GM12878 (cell line): ENCODE measurements at regions of chr2 and their contacts with region 1.

Region 1: GRCh38 chr2:74178201-74179062 is at the start of gene MOB1A:
- DNase-seq: peak; percentile 98
- ATAC-seq: peak; percentile 86
- H3K4me3 ChIP-seq: peak within 1 kb of the TSS; percentile 98
- H3K27ac ChIP-seq: peak within 1 kb of the TSS; percentile 96
- H3K4me1 ChIP-seq: peaks cover 30% of the 10 kb centered on the region
- H3K27me3 ChIP-seq: no peaks in the 10 kb centered on the region
- CTCF ChIP-seq: no peak
- EP300 ChIP-seq: 0 out of 4 replicates have a peak, but pooled peaks of 1 of the 2 experiments have one; percentile 17
- POLR2A ChIP-seq: peak; percentile 94
- RAD21 ChIP-seq: no peak
- polyA plus RNA-seq, gene MOB1A: 41.2 to 58.5 TPM

Region 2: DNA sequence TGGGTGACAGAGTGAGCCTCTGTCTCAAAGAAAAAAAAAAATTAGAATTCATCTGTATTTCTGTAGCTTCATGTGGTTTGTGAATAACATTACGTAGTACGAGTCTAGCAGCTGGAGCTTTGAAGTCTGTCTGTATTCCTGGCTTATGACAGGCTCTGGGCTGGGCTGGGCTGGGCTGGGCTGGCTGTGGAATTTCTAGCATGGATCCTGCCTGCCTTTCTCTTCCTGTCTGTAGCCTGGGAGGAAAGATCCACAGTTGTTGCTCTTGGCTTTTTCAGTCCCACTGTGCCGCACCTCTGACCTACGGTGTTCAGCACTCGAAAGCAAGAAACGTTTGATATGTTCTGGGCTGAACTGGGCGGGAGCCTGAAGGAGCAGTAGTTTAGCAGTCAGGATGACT is 86.2 kb before region 1 on chr2:
- CTCF ChIA-PET with region 1: no interaction called
- POLR2A ChIA-PET with region 1: no interaction called
- RAD21 ChIA-PET with region 1: no interaction called
- SMC1A ChIA-PET with region 1: no interaction called
- in situ Hi-C with region 1: no loop called
- intact Hi-C with region 1: no loop called
- DNase-seq: no peak
- ATAC-seq: no peak
- H3K4me3 ChIP-seq: no peak overlapping the region
- H3K27ac ChIP-seq: no peak overlapping the region
- H3K4me1 ChIP-seq: no peaks in the 10 kb centered on the region
- H3K27me3 ChIP-seq: no peaks in the 10 kb centered on the region
- CTCF ChIP-seq: no peak
- EP300 ChIP-seq: no peak
- POLR2A ChIP-seq: no peak
- RAD21 ChIP-seq: no peak

Region 3: DNA sequence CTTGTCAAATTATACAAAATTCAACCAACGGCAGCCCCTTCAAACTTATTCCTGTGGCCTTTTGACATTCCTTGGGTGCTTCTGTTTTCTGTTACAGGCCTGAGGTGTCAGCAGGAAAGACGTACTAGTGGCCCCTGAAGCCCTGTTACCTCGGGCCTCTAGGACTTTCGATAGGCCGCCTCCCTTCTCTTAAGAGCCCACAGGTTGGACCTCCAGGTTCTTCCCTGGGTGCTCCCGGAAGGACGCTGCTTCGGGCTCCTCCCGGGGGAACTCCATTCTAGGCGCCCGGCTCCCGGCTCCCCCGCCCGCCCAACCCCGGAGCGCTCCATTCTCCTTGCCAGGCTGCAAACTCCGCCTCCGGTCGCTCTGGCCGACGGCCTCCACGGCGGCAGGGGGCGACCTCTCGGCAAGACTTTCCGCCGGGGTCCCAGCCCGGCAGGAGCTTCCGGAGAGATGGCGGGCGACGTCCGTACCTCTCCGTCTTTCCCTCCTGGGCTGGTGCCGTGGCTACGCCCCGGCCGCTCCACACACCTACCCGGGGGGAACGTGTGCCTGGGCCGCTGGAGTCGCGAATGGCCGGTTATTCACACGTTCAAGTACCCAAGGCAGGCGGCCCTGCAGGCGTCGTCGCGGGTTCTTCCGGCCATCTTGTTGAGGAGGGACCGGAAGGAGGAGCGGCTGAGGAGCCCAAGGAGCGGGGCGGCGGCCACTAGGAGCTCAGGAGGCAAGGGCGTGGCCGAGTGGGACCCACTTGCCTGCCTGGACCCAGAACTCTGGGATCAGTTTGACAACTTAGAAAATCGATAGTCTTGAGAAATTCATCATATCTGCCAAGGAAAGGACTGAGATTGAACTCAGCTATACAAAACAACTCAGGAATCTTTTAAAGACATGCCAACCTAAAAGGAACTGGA is 58.3 kb before region 1 on chr2:
- CTCF ChIA-PET with region 1: interaction called, 5 read pairs
- POLR2A ChIA-PET with region 1: interaction called, 4 read pairs
- RAD21 ChIA-PET with region 1: interaction called, 3 read pairs
- SMC1A ChIA-PET with region 1: no interaction called
- in situ Hi-C with region 1: no loop called
- intact Hi-C with region 1: loop called (anchors 2 kb)
- DNase-seq: peak; percentile 54
- ATAC-seq: peak; percentile 99
- H3K4me3 ChIP-seq: peak overlapping the region; percentile 95
- H3K27ac ChIP-seq: peak overlapping the region; percentile 96
- H3K4me1 ChIP-seq: peaks cover 3% of the 10 kb centered on the region; the same call in 1 of the 2 replicates
- H3K27me3 ChIP-seq: no peaks in the 10 kb centered on the region; a peak in 1 of 4 replicates
- CTCF ChIP-seq: peak; percentile 55 to 78 (median 70)
- EP300 ChIP-seq: no peak
- POLR2A ChIP-seq: peak; percentile 95
- RAD21 ChIP-seq: no peak

Region 4: DNA sequence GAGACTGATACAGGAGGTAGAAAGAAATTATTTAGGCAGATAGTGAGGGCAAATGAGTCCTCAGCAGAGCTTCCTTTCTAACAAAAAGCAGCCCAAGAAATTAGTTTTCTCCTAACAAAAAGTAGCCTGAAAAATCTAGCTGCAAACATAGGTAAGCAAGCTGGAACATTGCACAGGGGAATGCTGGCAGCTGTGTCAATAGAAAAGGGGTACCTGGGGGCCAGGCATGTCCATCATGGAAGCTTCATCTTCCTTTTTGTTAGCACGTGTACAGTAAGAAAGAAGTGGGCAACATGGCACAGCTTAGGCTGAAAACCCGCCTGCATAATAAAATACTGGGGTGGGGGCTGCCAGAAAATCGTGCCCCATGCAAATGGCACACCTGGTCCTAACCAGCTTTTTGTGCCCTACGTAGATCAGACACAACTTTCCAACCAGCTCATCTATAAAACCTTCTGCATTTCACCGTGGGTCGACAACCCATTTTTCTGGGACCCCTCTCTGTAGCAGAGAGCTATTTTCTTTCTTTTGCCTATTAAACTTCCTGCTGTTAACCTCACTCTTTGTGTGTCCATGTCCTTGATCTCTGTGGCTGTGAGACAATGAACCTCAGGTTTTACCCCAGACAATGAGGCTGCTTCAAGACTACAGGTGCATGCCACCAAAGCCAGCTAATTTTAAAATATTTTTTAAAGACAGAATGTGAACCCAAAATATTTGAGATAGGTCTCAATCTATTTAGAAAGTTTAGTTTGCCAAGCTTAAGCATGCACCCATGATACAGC is 13.4 kb after region 1 on chr2:
- CTCF ChIA-PET with region 1: interaction called, 90 read pairs
- POLR2A ChIA-PET with region 1: interaction called, 83 read pairs
- RAD21 ChIA-PET with region 1: interaction called, 12 read pairs
- SMC1A ChIA-PET with region 1: interaction called, 14 read pairs
- in situ Hi-C with region 1: no loop called
- intact Hi-C with region 1: no loop called
- DNase-seq: no peak
- ATAC-seq: no peak
- H3K4me3 ChIP-seq: no peak overlapping the region
- H3K27ac ChIP-seq: no peak overlapping the region
- H3K4me1 ChIP-seq: peaks cover 9% of the 10 kb centered on the region
- H3K27me3 ChIP-seq: no peaks in the 10 kb centered on the region
- CTCF ChIP-seq: no peak
- EP300 ChIP-seq: no peak
- POLR2A ChIP-seq: no peak
- RAD21 ChIP-seq: no peak

Region 5: DNA sequence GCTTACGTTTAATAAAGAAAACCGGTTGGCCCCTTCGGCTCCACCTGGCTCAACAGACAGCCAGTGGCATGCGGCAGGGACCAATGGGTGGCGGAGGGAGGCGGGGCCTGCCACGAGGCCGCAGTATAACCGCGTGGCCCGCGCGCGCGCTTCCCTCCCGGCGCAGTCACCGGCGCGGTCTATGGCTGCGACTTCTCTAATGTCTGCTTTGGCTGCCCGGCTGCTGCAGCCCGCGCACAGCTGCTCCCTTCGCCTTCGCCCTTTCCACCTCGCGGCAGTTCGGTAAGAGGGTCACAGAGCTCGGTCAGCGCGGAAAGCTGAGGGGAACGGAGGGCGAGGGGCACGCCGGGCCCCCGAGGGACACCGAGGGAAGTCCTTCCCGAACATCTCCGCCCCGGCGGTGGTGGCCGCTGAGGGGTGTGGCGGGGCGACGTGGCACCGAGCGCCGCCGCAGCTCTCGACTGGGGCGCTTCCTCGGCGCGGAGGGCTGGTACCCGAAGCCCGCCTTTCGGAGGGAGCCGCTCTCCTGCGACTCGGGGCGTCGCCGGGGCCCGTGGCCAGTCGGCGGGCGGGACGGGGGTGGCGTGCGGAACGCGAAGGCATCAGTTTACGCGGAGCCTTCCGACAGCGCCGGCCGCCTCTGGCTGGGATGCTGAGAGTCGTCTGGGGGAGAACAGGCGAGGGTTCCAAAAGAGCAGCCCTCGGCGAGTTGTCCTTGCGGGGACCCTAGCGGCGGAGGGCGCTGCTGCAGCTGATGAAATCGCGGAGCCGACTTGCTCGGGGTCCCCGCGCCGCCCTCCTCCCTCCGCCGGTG is 20.2 kb after region 1 on chr2 and contains the start of gene MTHFD2:
- CTCF ChIA-PET with region 1: interaction called, 90 read pairs
- POLR2A ChIA-PET with region 1: interaction called, 83 read pairs
- RAD21 ChIA-PET with region 1: interaction called, 39 read pairs
- SMC1A ChIA-PET with region 1: interaction called, 28 read pairs
- in situ Hi-C with region 1: no loop called
- intact Hi-C with region 1: loop called (anchors 1 kb)
- DNase-seq: peak; percentile 90
- ATAC-seq: peak; percentile 92
- H3K4me3 ChIP-seq: peak within 1 kb of the TSS; percentile 96
- H3K27ac ChIP-seq: peak within 1 kb of the TSS; percentile 93
- H3K4me1 ChIP-seq: peaks cover 8% of the 10 kb centered on the region
- H3K27me3 ChIP-seq: no peaks in the 10 kb centered on the region
- CTCF ChIP-seq: peak; percentile 81 to 90 (median 87)
- EP300 ChIP-seq: no peak
- POLR2A ChIP-seq: peak; percentile 93
- RAD21 ChIP-seq: peak; percentile 62
- polyA plus RNA-seq, gene MTHFD2: 237 to 292 TPM

Region 6: GRCh38 chr2:74206180-74206688 is 27.8 kb after region 1 on chr2:
- CTCF ChIA-PET with region 1: interaction called, 90 read pairs
- POLR2A ChIA-PET with region 1: interaction called, 83 read pairs
- RAD21 ChIA-PET with region 1: interaction called, 39 read pairs
- SMC1A ChIA-PET with region 1: interaction called, 28 read pairs
- in situ Hi-C with region 1: no loop called
- intact Hi-C with region 1: loop called (anchors 1 kb)
- DNase-seq: peak; percentile 61
- ATAC-seq: peak; percentile 87
- H3K4me3 ChIP-seq: peak overlapping the region; percentile 11; the same call in 1 of the 2 replicates
- H3K27ac ChIP-seq: peak overlapping the region; percentile 26
- H3K4me1 ChIP-seq: peaks cover 24% of the 10 kb centered on the region
- H3K27me3 ChIP-seq: no peaks in the 10 kb centered on the region
- CTCF ChIP-seq: no peak
- EP300 ChIP-seq: 0 out of 4 replicates have a peak, but pooled peaks have one; percentile 48 to 49
- POLR2A ChIP-seq: peak; percentile 65
- RAD21 ChIP-seq: peak; percentile 16; the same call in 1 of the 2 replicates

Region 7: DNA sequence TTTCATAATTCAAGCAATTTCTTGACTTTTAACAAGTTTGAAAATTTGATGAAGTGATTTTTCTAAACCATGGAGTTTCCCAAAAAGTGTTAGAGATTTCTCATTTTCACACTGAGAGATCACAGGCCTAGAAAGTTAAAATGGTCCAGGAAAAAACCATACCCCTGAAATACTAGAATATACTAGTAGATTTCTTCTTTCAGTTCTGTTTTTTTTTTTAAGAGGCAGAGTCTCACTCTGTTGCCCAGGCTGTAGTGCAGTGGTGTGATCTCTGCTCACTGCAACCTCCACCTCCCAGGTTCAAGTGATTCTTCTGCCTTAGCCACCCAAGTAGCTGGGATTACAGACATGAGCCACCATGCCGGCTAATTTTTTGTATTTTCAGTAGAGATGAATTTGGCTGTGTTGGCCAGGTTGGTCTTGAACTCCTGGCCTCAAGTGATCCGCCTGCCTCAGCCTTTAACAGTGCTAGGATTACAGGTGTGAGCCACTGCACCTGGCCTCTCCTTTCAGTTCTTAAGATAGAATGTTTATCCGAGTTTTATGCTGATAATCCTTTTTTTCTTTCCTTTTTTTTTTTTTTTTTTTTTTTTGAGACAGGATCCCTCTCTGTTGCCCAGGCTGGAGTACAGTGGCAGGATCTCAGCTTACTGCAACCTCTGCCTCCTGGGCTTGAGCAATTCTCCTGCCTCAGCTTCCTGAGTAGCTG is 34.4 kb after region 1 on chr2:
- CTCF ChIA-PET with region 1: no interaction called
- POLR2A ChIA-PET with region 1: interaction called, 45 read pairs
- RAD21 ChIA-PET with region 1: interaction called, 5 read pairs
- SMC1A ChIA-PET with region 1: interaction called, 3 read pairs
- in situ Hi-C with region 1: no loop called
- intact Hi-C with region 1: no loop called
- DNase-seq: no peak
- ATAC-seq: peak; percentile 75
- H3K4me3 ChIP-seq: no peak overlapping the region
- H3K27ac ChIP-seq: no peak overlapping the region; the same call in 1 of the 2 replicates
- H3K4me1 ChIP-seq: no peaks in the 10 kb centered on the region; the same call in 1 of the 2 replicates
- H3K27me3 ChIP-seq: no peaks in the 10 kb centered on the region
- CTCF ChIP-seq: no peak
- EP300 ChIP-seq: no peak
- POLR2A ChIP-seq: no peak
- RAD21 ChIP-seq: no peak